Mammary epithelial cell (primary cell): ENCODE measurements at regions of chr4 and their contacts with region 1.

Region 1: GRCh38 chr4:55184600-55185523 is 59.5 kb upstream of the KDR start:
- DNase-seq: no peak
- H3K4me3 ChIP-seq: no peak overlapping the region
- H3K27ac ChIP-seq: peak overlapping the region; percentile 45
- H3K4me1 ChIP-seq: peaks cover 20% of the 10 kb centered on the region
- H3K27me3 ChIP-seq: no peaks in the 10 kb centered on the region
- CTCF ChIP-seq: peak; percentile 51 to 77

Region 2: DNA sequence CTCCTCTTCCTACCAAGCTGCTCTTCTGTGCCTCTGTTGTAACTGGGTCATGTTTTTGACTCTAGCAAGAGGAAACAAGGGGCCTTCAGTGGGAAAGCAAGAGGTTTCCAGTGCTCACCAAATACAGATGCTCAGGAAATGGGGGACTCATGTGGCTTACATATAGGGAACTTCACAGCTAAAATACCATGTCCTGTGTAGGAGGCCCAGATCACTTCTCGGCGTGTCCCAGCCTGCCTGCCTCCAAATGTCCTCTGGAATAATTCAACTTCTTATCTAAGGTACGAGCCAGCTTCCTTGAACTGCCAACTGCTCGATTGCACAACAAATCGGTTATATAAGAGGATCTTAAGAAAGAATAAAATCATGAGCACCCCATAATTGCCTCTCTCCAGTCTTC is 365.8 kb before region 1 on chr4:
- CTCF ChIA-PET with region 1: no interaction called
- dilution Hi-C with region 1: no loop called
- in situ Hi-C with region 1: no loop called
- intact Hi-C with region 1: no loop called
- DNase-seq: peak; percentile 21
- H3K4me3 ChIP-seq: no peak overlapping the region
- H3K27ac ChIP-seq: no peak overlapping the region
- H3K4me1 ChIP-seq: peaks cover 4% of the 10 kb centered on the region
- H3K27me3 ChIP-seq: no peaks in the 10 kb centered on the region
- CTCF ChIP-seq: no peak

Region 3: DNA sequence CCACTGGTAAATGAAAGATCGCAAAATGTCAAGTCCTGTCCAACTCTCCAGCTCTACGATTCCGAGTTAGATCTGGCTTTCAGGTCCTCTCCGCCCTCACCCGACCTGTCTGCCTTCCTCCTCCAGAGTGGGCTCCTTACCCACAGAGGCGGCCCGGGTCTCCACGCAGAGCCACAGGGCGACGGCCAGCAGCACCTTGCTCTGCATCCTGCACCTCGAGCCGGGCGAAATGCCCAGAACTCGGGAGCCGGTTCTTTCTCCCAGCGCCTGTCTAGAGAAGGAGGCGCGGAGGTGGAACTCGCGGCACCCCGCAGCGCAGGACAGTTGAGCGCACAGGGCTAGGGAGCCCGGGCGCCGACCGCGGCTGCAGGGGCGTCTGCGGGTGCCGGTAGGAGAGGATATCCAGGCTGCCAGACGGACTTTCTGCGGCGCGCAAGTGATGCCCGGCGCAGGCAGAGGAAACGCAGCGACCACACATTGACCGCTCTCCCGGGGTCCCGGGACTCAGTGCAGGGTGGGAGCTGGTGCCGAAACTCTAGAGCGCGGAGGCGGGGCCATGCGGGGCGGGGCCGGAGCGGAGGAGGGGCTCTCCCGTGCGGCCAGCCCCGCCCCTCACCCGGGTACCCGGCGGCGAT is 59.7 kb before region 1 on chr4 and contains the start of gene KDR:
- CTCF ChIA-PET with region 1: no interaction called
- dilution Hi-C with region 1: no loop called
- in situ Hi-C with region 1: no loop called
- intact Hi-C with region 1: loop called (anchors 1 kb)
- DNase-seq: peak; percentile 12
- H3K4me3 ChIP-seq: peak within 1 kb of the TSS; percentile 31 to 49 (median 45)
- H3K27ac ChIP-seq: no peak within 1 kb of the TSS
- H3K4me1 ChIP-seq: peaks cover 9% of the 10 kb centered on the region
- H3K27me3 ChIP-seq: peaks cover 22% of the 10 kb centered on the region
- CTCF ChIP-seq: no peak
- total RNA-seq, gene KDR: 0.49 to 1.2 TPM

Region 4: DNA sequence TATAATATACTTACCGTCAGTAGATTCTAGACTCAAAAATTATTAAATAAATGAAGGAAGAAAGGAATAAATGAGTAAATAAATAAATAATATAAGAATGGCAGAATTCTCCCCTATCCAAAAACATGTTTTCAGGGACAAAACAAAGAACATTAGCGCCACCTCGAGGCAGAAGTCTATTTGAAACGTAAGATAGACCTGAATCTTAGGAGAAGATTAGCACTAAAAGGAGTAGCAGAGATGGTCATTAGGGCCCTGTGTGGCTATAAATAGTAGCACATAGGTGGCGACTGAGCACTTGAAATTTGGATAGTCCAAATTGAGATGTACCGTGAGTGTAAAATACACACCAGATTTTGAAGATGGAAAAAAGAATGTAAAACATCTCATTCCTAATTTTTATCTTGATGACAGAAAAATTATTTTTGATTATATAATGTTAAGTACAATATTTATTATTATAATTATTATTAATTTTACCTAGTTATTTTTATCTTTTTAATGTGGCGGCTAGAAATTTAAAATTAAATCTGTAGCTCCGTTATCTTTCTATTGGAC is 136.9 kb after region 1 on chr4:
- CTCF ChIA-PET with region 1: no interaction called
- dilution Hi-C with region 1: no loop called
- in situ Hi-C with region 1: no loop called
- intact Hi-C with region 1: loop called (anchors 1 kb)
- DNase-seq: peak; percentile 63
- H3K4me3 ChIP-seq: no peak overlapping the region
- H3K27ac ChIP-seq: no peak overlapping the region
- H3K4me1 ChIP-seq: no peaks in the 10 kb centered on the region
- H3K27me3 ChIP-seq: no peaks in the 10 kb centered on the region
- CTCF ChIP-seq: peak; percentile 61 to 73